ENCODE measurements at regions of chr2 and their contacts with region 1.

Region 1: DNA sequence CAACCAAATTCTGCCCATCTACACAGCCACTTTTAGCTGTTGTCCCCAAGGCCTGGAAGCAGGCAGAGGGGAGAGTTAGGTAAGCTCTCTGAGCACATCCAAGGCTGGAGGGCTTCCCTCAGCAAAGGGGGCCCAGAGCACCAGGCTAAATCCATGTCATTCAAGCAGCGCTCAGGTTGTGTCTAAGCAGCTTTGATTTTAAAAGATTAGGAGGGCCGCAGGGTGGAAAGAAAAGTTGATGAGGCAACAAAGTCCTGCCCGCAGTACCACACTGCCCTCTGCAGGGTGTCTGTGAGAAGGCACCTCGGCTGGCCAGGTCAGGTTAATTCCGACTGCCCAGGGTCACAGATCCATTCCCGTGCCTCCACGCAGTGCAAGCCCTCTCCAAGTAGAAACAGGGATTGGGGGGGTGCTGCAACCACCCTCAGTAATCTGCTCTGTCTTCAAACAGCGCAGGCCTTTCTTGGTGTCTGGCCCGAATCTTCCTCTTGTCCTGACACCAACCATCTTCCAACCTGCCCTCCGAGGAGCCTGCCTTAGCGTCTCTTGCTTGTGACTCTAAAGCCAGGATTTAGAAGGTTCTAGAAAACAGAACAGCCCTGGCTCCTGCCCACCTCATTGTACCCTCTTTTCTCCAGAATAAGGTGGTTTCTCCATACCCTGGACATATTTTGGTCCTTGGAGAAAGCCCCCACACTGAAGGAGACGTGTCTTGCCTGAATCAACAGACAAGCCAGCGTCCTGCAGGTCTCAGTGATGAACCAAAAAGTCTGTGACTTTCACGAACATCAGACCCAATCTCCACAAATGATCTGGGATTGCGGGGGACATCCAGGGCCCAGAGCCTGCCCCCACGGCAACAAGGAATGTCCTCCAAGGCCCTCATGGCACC is 289.2 kb downstream of the TNS1 start:
- DNase-seq: peak; percentile 55
- H3K4me3 ChIP-seq: no peak overlapping the region
- H3K27ac ChIP-seq: no peak overlapping the region
- H3K4me1 ChIP-seq: no peaks in the 10 kb centered on the region
- H3K27me3 ChIP-seq: peaks cover 0 to 5% of the 10 kb centered on the region in 2 experiments
- CTCF ChIP-seq: peak; percentile 77 to 94
- POLR2A ChIP-seq: no peak

Region 2: GRCh38 chr2:216680951-216681629 is 1032.6 kb before region 1 on chr2:
- CTCF ChIA-PET with region 1: interaction called, 73 read pairs
- POLR2A ChIA-PET with region 1: no interaction called
- dilution Hi-C with region 1: no loop called
- intact Hi-C with region 1: loop called (anchors 1 kb)
- DNase-seq: no peak
- H3K4me3 ChIP-seq: no peak overlapping the region
- H3K27ac ChIP-seq: no peak overlapping the region
- H3K4me1 ChIP-seq: no peaks in the 10 kb centered on the region
- H3K27me3 ChIP-seq: peaks cover 0 to 13% of the 10 kb centered on the region in 2 experiments
- CTCF ChIP-seq: no peak
- POLR2A ChIP-seq: no peak

Region 3: DNA sequence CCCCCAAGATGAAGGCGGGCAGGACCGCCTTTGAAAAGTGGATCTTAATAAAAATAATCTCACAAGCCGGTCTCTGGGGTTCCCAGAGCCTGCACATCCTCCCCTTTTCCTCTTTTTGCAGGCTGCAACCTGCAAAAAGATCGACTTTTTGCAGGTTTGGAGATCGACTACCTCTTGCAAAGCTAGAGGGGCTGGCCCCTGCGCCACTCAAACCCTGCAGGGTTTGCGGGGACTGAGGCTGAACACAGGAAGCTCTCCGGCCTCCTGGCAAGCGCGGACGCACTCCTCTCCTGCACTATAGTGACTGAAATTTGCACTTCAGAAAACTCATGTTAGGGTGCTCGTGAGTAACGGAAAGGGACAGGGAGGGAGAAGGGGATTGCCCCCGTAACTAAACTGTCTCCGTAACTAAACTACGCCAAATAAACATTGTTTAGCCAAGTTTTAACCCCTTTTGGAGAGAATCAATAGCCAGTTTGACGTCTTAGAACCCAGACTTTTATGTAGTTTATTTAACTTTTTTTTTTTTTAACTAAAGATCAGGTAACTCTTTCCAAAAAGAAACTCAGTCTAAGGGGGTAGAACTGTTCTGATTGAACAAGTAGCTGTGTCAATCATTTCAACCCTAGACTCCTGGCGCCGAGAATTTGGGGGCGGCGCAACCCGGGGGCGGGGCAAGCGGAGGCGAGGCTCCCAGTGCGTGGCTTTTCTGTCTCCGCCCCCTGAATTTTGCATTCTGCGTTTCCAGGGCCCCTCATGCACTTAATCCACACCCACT is 1020.8 kb before region 1 on chr2:
- CTCF ChIA-PET with region 1: interaction called, 73 read pairs
- POLR2A ChIA-PET with region 1: no interaction called
- dilution Hi-C with region 1: no loop called
- intact Hi-C with region 1: no loop called
- DNase-seq: peak; percentile 46
- H3K4me3 ChIP-seq: peak overlapping the region; percentile 31 to 55 (median 48)
- H3K27ac ChIP-seq: no peak overlapping the region
- H3K4me1 ChIP-seq: peaks cover 20% of the 10 kb centered on the region
- H3K27me3 ChIP-seq: peaks cover 73 to 76% of the 10 kb centered on the region in 2 experiments
- CTCF ChIP-seq: no peak
- POLR2A ChIP-seq: no peak

Region 4: DNA sequence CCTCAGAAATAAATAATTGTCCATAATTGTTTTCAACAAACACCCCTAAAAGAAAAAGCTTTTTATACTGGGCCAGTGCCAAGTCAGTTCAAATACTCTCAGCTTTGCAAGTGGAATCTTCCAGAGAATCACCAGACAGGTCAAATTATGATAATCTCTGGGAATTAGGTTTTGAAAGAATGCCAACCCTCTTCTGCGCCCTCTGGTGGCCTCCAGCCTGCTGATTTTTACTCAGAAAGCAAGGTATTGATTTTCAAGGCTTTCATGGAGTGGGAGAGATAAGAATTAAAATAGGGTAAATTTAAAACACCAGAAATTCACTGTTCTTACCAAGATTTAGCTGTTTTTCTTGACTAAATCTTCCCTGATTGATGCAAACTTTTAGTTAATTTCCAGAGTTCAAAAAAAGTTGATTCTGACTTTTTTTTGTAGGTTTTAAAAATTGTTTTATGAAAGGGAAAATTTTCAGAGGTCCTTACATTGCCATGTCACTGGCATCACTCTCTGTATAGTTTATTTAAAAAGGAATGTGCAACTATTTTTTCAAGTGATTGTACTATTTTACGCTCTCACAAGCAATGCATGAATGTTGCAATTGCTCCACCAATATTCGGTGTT is 570.9 kb before region 1 on chr2:
- CTCF ChIA-PET with region 1: no interaction called
- POLR2A ChIA-PET with region 1: no interaction called
- dilution Hi-C with region 1: no loop called
- intact Hi-C with region 1: loop called (anchors 5 kb)
- DNase-seq: peak; percentile 46
- H3K4me3 ChIP-seq: no peak overlapping the region
- H3K27ac ChIP-seq: no peak overlapping the region
- H3K4me1 ChIP-seq: no peaks in the 10 kb centered on the region
- H3K27me3 ChIP-seq: peaks cover 3 to 7% of the 10 kb centered on the region in 2 experiments
- CTCF ChIP-seq: peak; percentile 66 to 73
- POLR2A ChIP-seq: no peak

Region 5: DNA sequence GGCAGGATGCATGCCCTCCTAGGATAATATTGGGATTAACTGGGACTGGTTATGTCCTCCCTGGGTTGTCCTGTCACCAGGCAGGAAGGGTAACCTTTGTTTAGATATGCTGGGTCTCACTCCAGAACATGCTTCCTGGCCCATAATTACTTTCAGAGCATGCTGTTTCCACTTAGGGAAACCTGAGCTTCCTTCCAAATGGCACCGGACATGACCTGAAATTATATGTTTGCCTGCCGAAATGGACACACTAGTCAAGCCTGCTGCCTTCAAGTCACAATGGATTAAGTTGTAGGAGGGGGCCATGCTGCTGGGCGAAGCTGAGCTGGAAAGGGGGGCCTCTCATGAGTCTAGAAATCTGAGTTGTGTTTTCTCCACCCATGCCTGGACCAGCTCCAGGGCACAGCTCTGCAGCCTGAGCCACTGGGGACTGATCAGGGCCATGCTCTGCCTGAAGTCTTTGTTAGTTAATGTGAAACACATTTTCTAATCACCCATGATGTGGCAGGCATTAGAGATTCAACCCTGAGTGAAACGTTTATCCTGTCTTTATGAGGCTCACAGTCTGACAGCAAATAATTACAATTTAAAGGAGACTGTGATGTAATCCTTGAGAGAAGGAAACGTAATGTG is 15.9 kb after region 1 on chr2:
- CTCF ChIA-PET with region 1: interaction called, 18 read pairs
- POLR2A ChIA-PET with region 1: no interaction called
- dilution Hi-C with region 1: no loop called
- intact Hi-C with region 1: no loop called
- DNase-seq: no peak
- H3K4me3 ChIP-seq: no peak overlapping the region
- H3K27ac ChIP-seq: no peak overlapping the region
- H3K4me1 ChIP-seq: no peaks in the 10 kb centered on the region
- H3K27me3 ChIP-seq: no peaks in the 10 kb centered on the region
- CTCF ChIP-seq: no peak
- POLR2A ChIP-seq: no peak